ENCODE measurements at regions of chr3 and their contacts with region 1.

Region 1: GRCh38 chr3:18424729-18425640 is at the start of gene SATB1:
- DNase-seq: peak; percentile 84
- H3K4me3 Mint-ChIP-seq: peak within 1 kb of the TSS; percentile 86
- H3K27ac Mint-ChIP-seq: peak within 1 kb of the TSS; percentile 98
- H3K4me1 Mint-ChIP-seq: peaks cover 73% of the 10 kb centered on the region
- H3K27me3 Mint-ChIP-seq: no peaks in the 10 kb centered on the region
- total RNA-seq, gene SATB1: 303 to 305 TPM

Region 2: GRCh38 chr3:18208856-18209255 is 216.1 kb before region 1 on chr3:
- CTCF ChIA-PET with region 1: no interaction called
- intact Hi-C with region 1: no loop called
- DNase-seq: no peak
- H3K4me3 Mint-ChIP-seq: no peak overlapping the region
- H3K27ac Mint-ChIP-seq: no peak overlapping the region
- H3K4me1 Mint-ChIP-seq: peaks cover 9% of the 10 kb centered on the region
- H3K27me3 Mint-ChIP-seq: peaks cover 2% of the 10 kb centered on the region

Region 3: GRCh38 chr3:18412684-18413083 is 12.3 kb before region 1 on chr3:
- CTCF ChIA-PET with region 1: interaction called, 4 read pairs
- intact Hi-C with region 1: loop called (anchors 1 kb)
- DNase-seq: no peak
- H3K4me3 Mint-ChIP-seq: peak overlapping the region; percentile 69
- H3K27ac Mint-ChIP-seq: peak overlapping the region; percentile 86
- H3K4me1 Mint-ChIP-seq: peaks cover 90% of the 10 kb centered on the region
- H3K27me3 Mint-ChIP-seq: no peaks in the 10 kb centered on the region

Region 4: GRCh38 chr3:18438586-18438985 is 13.6 kb after region 1 on chr3:
- CTCF ChIA-PET with region 1: no interaction called
- intact Hi-C with region 1: loop called (anchors 1 kb)
- DNase-seq: peak; percentile 83
- H3K4me3 Mint-ChIP-seq: peak overlapping the region; percentile 76
- H3K27ac Mint-ChIP-seq: peak overlapping the region; percentile 90
- H3K4me1 Mint-ChIP-seq: peaks cover 30% of the 10 kb centered on the region
- H3K27me3 Mint-ChIP-seq: no peaks in the 10 kb centered on the region

Region 5: DNA sequence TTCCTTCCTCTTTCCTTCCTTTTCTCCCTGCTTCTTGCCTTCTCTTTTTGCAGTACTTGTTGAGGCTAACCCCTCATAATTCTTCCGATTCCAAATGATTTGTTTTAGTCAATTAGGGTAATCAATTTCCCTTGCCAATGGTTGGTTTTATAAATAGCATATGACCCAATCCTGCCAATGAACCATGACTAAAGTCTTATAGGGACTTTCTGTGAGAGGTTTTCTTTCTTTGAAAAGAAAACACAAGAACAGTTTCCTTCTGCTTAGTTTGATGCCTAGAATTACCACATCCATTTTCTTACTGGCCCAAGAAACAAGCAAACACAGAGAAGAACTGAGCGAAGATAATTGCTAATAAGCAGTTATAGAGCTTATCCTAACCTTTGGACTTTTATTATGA is 292.6 kb after region 1 on chr3:
- CTCF ChIA-PET with region 1: no interaction called
- intact Hi-C with region 1: loop called (anchors 1 kb)
- DNase-seq: no peak
- H3K4me3 Mint-ChIP-seq: no peak overlapping the region
- H3K27ac Mint-ChIP-seq: peak overlapping the region; percentile 84
- H3K4me1 Mint-ChIP-seq: peaks cover 71% of the 10 kb centered on the region
- H3K27me3 Mint-ChIP-seq: no peaks in the 10 kb centered on the region

Region 6: DNA sequence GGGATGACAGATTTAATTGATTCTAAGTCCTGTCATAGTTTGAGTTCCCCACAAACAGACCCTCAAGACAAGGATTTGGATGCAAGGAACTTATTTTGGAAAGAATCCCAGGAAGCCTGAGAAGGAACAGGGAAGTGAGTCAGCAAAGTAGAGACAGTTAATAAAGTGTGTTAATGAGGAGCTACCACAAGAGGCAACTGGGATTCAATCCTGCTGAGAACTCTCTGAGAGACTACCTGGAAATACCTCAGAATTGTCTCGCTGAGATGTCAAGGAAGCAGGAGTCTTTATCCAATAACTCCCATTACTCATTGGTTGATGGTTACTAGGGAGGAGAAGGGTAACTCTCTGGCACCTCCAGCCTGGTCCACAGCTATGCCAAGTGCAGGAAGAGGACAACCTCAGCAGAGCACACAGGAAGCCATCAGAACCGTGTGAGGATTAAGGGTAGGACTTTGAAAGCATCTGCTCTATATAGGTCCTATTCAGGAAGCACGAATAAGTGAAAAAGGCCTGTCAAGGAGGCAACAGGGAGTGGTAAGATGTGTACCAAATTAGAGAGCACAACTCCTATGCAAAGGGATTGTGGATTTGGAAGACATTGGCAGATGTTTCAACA is 412.3 kb after region 1 on chr3:
- CTCF ChIA-PET with region 1: no interaction called
- intact Hi-C with region 1: no loop called
- DNase-seq: no peak
- H3K4me3 Mint-ChIP-seq: no peak overlapping the region
- H3K27ac Mint-ChIP-seq: no peak overlapping the region
- H3K4me1 Mint-ChIP-seq: peaks cover 20% of the 10 kb centered on the region
- H3K27me3 Mint-ChIP-seq: no peaks in the 10 kb centered on the region

Measured in activated naive CD4-positive, alpha-beta T cell treated with anti-CD3 and anti-CD28 coated beads for 36 hours (primary cell).